PC-3 (cell line): ENCODE measurements at regions of chr1 and their contacts with region 1.

Region 1: DNA sequence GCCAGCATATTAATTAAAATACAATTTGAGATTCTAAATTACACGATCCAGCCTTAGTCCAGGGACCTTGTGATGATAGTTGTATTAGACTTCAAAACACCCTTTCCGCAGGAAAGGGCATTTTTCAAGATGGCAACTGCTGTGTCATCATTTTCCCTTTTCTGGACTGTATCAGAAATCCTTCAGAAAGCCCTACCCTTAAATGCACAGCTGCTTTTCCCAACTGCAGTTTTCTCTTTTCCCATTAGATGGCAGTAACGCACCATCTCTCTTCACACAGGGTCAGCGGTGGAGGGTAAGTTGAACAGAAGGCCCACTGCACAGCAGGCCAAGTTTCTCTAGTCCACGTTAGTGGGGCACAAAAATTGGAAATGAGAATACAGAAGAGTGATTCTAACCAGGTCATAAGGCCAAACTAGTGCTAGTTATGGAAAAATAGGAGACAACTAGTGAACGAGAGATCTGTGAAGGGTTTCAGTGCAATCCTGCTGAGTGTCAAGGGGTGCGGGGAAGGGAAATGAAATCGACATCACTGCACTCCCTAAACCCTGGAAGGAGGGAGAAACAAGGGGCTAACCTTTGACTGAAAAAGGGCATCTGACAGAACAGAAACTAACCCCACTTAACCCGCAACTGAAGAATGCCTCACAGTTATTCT is 22.1 kb upstream of the TDRD10 start:
- DNase-seq: peak; percentile 98
- ATAC-seq: peak; percentile 85
- H3K4me3 ChIP-seq: no peak overlapping the region
- H3K27ac ChIP-seq: no peak overlapping the region
- H3K4me1 ChIP-seq: peaks cover 33% of the 10 kb centered on the region
- H3K27me3 ChIP-seq: no peaks in the 10 kb centered on the region
- CTCF ChIP-seq: peak; percentile 99

Region 2: GRCh38 chr1:154324669-154325582 is 155.0 kb before region 1 on chr1 and contains the start of gene ATP8B2:
- CTCF ChIA-PET with region 1: no interaction called
- POLR2A ChIA-PET with region 1: no interaction called
- intact Hi-C with region 1: loop called (anchors 5 kb)
- DNase-seq: peak; percentile 92
- ATAC-seq: peak; percentile 40
- H3K4me3 ChIP-seq: peak within 1 kb of the TSS; percentile 79
- H3K27ac ChIP-seq: peak within 1 kb of the TSS; percentile 76
- H3K4me1 ChIP-seq: peaks cover 25% of the 10 kb centered on the region
- H3K27me3 ChIP-seq: peaks cover 14% of the 10 kb centered on the region; the same call in 1 of the 2 replicates
- CTCF ChIP-seq: peak; percentile 97
- total RNA-seq, gene ATP8B2: 25.7 and 36.3 TPM in 2 replicates

Region 3: DNA sequence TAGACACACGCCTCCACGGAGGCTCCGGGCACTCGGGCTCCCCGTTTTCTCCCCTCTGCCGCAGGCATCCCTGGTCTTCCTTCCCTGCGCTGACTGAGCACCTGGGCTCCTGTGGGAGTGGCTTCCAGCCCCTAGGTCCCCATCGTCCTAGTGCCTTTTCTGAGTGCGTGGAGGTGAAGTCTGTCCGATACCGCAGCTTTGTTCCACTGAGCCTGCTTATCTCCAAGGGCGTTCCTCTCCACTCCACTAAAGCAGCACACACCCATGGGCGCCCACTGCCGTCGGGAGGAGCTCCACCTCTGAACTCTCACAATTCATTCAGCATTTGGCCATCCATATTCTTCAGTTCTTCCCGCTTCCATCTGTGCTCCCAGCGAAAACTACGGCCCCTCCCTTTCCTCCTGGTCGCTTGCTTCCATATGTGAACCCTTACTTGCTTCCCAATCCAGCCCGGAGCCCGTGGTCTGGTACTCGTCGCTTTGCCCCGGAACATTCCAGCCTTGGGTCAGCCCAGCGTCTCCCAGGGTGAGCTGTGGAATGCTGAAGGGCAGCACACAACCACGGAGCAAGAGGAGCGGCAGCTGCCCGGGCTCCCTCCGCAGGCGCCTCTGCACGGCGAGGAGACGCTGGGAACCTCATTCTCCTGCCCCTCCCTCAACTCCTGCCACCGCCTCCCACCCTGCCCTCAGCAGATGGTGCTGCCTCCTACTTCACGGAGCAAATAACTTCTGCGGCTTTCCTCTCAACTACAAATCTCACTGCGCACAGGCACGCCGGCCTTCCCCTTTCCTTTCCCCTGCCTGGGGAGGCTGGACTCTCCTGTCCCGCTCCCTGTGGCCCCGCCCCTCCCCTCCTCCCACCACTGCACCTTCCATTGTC is 127.1 kb before region 1 on chr1:
- CTCF ChIA-PET with region 1: no interaction called
- POLR2A ChIA-PET with region 1: no interaction called
- intact Hi-C with region 1: loop called (anchors 2 kb)
- DNase-seq: peak; percentile 37
- ATAC-seq: peak; percentile 76
- H3K4me3 ChIP-seq: peak overlapping the region; percentile 69
- H3K27ac ChIP-seq: no peak overlapping the region
- H3K4me1 ChIP-seq: peaks cover 18% of the 10 kb centered on the region; the same call in 1 of the 2 replicates
- H3K27me3 ChIP-seq: no peaks in the 10 kb centered on the region
- CTCF ChIP-seq: no peak; the same call in 1 of the 2 replicates

Region 4: DNA sequence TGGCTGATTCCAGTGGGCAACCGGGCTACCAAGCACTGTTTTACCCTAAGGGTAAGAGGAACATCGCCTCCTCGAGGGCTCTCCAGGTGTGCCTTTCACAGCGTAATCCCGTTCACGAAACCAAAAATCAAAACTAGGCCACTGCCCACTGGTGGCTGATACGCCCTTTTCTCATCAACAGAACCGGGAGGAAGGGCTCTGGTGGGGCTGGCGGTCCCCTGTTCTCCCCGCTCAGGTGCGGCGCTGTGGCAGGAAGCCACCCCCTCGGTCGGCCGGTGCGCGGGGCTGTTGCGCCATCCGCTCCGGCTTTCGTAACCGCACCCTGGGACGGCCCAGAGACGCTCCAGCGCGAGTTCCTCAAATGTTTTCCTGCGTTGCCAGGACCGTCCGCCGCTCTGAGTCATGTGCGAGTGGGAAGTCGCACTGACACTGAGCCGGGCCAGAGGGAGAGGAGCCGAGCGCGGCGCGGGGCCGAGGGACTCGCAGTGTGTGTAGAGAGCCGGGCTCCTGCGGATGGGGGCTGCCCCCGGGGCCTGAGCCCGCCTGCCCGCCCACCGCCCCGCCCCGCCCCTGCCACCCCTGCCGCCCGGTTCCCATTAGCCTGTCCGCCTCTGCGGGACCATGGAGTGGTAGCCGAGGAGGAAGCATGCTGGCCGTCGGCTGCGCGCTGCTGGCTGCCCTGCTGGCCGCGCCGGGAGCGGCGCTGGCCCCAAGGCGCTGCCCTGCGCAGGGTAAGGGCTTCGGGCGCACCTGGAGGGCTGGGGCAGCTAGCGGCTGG is 74.7 kb before region 1 on chr1 and contains the start of gene IL6R:
- CTCF ChIA-PET with region 1: interaction called, 4 read pairs
- POLR2A ChIA-PET with region 1: no interaction called
- intact Hi-C with region 1: loop called (anchors 1 kb)
- DNase-seq: peak; percentile 98
- ATAC-seq: peak; percentile 88
- H3K4me3 ChIP-seq: peak within 1 kb of the TSS; percentile 93
- H3K27ac ChIP-seq: peak within 1 kb of the TSS; percentile 93
- H3K4me1 ChIP-seq: peaks cover 30% of the 10 kb centered on the region
- H3K27me3 ChIP-seq: no peaks in the 10 kb centered on the region
- CTCF ChIP-seq: peak; percentile 75
- total RNA-seq, gene IL6R: 16.1 and 43.3 TPM in 2 replicates

Region 5: GRCh38 chr1:154533952-154534844 is 54.3 kb after region 1 on chr1:
- CTCF ChIA-PET with region 1: no interaction called
- POLR2A ChIA-PET with region 1: no interaction called
- intact Hi-C with region 1: loop called (anchors 5 kb)
- DNase-seq: peak; percentile 76
- ATAC-seq: peak; percentile 92
- H3K4me3 ChIP-seq: no peak overlapping the region
- H3K27ac ChIP-seq: no peak overlapping the region
- H3K4me1 ChIP-seq: no peaks in the 10 kb centered on the region
- H3K27me3 ChIP-seq: peaks cover 35% of the 10 kb centered on the region
- CTCF ChIP-seq: peak; percentile 86

Region 6: GRCh38 chr1:154546264-154547063 is 66.6 kb after region 1 on chr1:
- CTCF ChIA-PET with region 1: interaction called, 30 read pairs
- POLR2A ChIA-PET with region 1: no interaction called
- intact Hi-C with region 1: loop called (anchors 1 kb)
- DNase-seq: peak; percentile 82
- ATAC-seq: peak; percentile 96
- H3K4me3 ChIP-seq: no peak overlapping the region
- H3K27ac ChIP-seq: no peak overlapping the region
- H3K4me1 ChIP-seq: no peaks in the 10 kb centered on the region
- H3K27me3 ChIP-seq: peaks cover 9% of the 10 kb centered on the region
- CTCF ChIP-seq: peak; percentile 72

Region 7: GRCh38 chr1:154760469-154760933 is 280.6 kb after region 1 on chr1:
- CTCF ChIA-PET with region 1: no interaction called
- POLR2A ChIA-PET with region 1: no interaction called
- intact Hi-C with region 1: loop called (anchors 2 kb)
- DNase-seq: peak; percentile 56
- ATAC-seq: peak; percentile 89
- H3K4me3 ChIP-seq: no peak overlapping the region
- H3K27ac ChIP-seq: no peak overlapping the region
- H3K4me1 ChIP-seq: no peaks in the 10 kb centered on the region
- H3K27me3 ChIP-seq: peaks cover 44% of the 10 kb centered on the region
- CTCF ChIP-seq: peak; percentile 79